Right ventricle myocardium inferior (tissue), 1 donor: ENCODE measurements at regions of chr15 and their contacts with region 1.

Region 1: GRCh38 chr15:74768771-74769342 is 13.0 kb upstream of the CSK start:
- DNase-seq: peak; percentile 82
- ATAC-seq: peak; percentile 57

Region 2: GRCh38 chr15:74253211-74253921 is 515.5 kb before region 1 on chr15:
- intact Hi-C with region 1: no loop called
- DNase-seq: peak; percentile 56
- ATAC-seq: no peak

Region 3: DNA sequence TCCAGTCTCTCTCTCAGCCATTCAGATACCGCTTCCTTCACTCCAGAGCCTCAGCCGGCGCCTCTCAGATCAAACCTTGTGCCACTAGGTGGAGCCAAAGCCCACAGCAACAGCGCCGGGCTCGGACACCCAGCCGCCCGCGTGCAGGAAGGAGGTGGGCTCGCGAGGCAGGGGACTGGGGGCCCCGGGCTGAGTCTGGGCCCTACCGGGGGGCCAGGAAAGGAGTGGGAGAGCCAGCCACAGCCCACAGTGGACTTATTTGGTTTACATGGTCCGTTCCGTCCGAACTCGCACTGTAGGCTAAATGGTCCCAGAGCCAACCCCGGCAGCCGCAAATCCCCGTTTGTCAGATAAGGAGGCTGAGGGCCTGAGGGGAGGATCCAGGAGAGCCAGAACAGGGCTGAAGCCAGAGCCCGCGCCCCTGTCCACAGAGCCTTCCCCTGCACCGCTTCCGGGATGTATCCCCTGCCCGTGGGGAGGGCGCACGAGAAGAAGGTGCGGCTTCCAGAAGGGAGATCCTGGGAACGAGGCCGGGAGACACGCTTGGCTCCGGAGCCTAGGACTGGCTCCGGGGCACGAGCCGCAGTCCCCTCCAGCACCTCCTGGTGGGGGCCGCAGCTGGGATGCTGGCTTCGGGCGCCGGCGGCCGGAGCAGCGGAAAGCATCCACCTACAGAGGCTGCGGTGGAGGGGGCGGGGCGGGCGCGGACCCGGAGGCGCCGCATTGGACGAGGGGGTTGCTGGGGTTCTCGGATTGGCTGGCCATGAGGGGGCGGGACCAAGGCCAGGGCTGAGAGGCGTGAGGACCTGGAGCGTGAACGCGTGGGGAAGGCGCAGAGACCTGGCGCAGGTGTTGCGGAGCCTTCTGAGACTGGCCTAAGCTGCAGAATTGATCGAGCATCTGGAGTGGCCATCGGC is 394.9 kb before region 1 on chr15:
- intact Hi-C with region 1: loop called (anchors 2 kb)
- DNase-seq: peak; percentile 96
- ATAC-seq: peak; percentile 98

Region 4: DNA sequence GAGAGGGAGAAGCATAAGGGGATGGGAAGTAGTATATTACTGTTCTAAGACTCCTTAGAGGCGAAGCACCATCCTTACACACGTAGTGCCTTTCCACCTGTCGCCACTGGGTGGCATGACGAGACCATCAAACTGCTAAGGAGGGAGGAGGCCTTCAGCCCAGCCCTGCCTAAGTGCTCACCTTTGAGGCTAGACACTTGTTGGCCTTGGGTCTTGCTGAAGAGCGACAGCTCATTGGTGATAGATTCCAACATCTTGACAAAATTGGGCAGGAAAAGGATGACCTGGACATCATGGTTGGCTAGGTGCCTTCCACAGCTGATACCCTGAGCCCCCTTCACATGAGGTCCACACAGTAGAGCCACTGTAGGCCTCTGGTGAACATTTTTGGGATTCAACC is 133.6 kb before region 1 on chr15:
- intact Hi-C with region 1: loop called (anchors 1 kb)
- DNase-seq: no peak
- ATAC-seq: peak; percentile 64

Region 5: GRCh38 chr15:74695597-74696397 is 73.1 kb before region 1 on chr15 and contains the start of gene EDC3:
- intact Hi-C with region 1: loop called (anchors 10 kb)
- DNase-seq: peak; percentile 93
- ATAC-seq: peak; percentile 95
- total RNA-seq, gene EDC3: 13.5 TPM

Region 6: GRCh38 chr15:74799856-74800547 is 31.1 kb after region 1 on chr15:
- intact Hi-C with region 1: loop called (anchors 2 kb)
- DNase-seq: peak; percentile 95
- ATAC-seq: peak; percentile 88

Region 7: DNA sequence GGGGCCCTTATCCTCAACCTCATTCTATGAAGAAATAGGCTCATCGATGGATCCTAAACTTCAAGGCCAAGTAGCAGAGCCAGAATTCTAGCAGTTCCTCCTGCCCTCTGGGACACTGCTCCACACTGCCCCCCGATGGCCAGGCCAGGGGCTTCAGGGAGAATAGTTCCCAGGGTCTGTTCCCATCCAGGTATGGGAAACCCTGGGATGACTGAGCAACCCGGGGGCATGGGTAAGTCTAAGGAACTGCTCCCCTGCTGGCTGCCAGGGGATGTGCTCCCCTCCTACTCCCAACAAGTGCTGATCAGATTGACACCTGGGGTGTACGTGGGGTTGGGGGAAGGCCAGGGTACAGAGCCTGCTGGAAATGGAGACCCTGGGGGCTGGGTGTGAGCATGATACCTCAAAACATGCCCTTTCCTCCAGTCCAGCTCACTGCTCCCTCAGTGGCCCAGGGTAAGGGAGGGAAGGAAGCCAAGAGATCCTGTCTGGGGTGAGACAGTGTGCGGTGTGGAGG is 66.5 kb after region 1 on chr15:
- intact Hi-C with region 1: loop called (anchors 2 kb)
- DNase-seq: peak; percentile 81
- ATAC-seq: no peak

Region 8: DNA sequence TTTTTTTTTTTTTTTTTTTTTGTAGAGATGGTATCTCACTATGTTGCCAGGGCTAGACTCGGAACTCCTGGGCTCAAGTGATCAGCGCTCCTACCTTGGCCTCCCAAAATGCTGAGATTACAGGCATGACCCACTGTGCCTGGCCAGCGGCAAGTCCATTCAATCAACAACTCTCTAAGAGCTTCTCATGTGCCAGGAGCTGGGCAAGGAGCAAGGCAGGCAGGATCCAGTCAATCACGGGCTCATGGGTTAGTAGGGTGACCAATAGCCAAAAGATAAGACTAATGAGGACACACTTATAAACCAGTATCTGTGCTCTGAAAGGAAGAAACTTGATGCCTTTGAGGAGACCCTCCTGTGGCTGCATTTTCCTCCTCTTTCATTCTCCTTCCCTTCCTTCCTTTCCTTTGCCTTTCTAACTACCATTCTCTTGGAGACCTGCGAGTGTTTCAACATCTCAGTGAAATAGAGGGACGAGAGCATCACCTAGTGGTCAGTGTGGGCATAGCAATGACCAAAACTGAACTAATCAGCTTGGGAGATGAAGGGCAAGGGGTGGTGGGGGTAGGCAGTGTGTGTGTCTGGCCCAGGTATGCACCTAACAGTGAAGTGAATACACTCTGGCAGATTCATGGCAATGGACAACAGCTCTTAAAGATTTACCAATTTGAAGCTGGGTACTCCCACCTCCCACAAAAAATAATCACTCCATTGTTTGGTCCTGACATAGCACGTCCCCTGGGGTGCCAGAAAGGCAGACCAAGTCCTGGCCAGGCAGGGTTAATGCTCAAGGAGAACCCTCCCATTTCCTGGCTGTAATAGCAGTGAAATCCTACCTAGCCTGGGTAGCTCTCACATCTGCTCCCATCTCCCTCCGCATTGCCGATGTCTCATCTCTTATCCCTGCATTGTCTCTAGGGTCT is 181.5 kb after region 1 on chr15:
- intact Hi-C with region 1: loop called (anchors 1 kb)
- DNase-seq: no peak
- ATAC-seq: peak; percentile 65